Activated CD4-positive, alpha-beta T cell treated with anti-CD3 and anti-CD28 coated beads for 36 hours (primary cell): ENCODE measurements at regions of chr12 and their contacts with region 1.

Region 1: DNA sequence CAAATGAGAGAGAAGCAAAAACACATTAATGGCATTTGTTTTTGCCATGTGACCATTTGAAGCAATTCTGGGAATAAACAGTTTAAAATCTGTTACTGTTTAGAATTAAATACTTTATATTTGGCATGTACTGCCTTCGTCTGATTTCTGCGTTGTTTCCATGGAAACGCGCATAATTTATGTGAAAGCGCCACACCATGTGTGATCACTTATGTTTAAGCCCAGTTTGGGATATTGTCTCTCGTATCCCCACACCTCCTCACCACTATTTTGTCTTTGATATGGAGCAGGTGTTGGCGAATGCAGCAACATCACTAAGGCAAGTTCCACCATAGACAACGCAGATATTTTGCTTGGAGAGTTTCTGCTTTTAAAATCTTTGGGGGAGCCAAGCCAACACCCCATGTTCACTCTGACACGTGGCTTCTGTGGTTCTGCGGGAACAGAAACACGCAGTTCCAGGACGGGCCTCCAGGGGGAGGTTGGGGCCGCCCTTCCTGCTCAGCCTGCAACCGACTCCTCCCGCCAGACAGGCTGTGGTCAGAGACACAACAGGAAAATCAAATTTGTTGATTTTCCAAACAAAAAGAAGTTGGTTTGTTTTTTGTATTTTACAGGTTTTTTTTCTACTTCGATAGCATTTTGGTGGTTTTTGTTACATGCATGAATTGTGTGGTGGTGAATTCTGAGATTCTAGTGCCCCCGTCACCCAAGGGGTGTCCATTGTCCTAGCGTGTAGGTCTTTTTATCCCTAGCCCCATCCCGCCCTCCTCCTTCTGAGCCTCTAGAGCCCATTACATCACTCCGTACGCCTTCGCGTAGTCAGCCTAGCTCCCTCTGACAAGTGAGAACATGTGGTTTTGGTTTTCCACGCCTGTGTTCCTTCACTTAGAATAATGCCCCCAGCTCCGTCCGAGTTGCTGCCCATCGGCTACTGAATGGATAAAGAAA is 101.9 kb upstream of the SFSWAP start:
- DNase-seq: peak; percentile 79
- ATAC-seq: peak; percentile 40
- H3K4me3 Mint-ChIP-seq: no peak overlapping the region
- H3K27ac Mint-ChIP-seq: no peak overlapping the region
- H3K4me1 Mint-ChIP-seq: peaks cover 48% of the 10 kb centered on the region
- H3K27me3 Mint-ChIP-seq: no peaks in the 10 kb centered on the region

Region 2: DNA sequence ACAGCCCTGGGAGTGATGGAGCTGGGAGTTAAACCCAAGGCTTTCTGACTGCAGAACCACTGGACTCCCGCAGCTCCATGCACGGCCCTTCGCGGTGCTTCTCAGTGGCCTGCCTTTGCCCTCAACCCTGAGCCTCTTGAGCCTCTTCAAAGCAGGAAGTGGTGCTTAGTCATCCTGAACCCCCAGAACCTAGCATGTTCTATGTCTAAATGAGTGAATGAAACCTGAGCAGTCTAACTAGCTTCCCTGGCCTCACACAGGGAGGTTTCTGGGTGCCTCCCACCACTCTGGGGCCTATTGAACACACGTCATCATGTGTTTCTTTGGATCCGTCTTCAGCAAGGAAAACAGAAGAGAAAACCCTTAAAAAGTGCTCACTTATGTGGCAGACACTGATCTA is 16.0 kb before region 1 on chr12:
- CTCF ChIA-PET with region 1: interaction called, 4 read pairs
- POLR2A ChIA-PET with region 1: no interaction called
- intact Hi-C with region 1: loop called in 1 of 2 experiments (anchors 1 kb)
- DNase-seq: peak; percentile 59
- ATAC-seq: peak; percentile 98
- H3K4me3 Mint-ChIP-seq: no peak overlapping the region
- H3K27ac Mint-ChIP-seq: no peak overlapping the region
- H3K4me1 Mint-ChIP-seq: peaks cover 11% of the 10 kb centered on the region
- H3K27me3 Mint-ChIP-seq: no peaks in the 10 kb centered on the region

Region 3: DNA sequence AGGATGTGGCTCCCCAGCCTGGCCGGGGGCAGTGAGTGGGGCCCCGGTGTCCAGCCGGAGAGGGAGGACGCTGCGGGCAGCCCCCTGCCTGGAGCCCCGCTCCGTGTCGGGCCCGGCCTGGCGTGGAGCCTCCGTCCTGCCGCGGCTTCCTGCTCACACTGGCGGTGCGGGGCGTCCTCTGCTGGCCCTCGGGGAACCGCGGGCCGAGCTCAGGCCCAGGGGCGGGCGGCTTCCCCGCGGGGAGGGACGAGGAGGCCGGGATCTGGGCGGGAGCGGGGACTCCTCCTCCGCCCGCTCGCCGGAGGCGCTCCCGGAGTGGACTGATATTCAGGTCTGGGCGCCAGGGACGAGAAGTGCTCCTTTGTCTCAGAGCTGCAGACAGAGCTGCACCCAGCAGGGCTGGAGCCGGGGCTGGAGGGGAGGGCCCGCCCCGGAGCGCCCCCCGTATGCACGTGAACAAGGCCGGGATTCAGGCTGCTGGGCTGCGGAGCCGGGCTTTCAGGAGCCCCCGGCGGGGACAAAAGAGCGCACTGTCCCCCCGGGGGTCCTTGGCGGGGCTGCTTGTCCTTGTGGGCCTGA is 221.4 kb after region 1 on chr12:
- CTCF ChIA-PET with region 1: no interaction called
- POLR2A ChIA-PET with region 1: no interaction called
- intact Hi-C with region 1: loop called in 1 of 2 experiments (anchors 2 kb)
- DNase-seq: peak; percentile 69
- ATAC-seq: peak; percentile 63
- H3K4me3 Mint-ChIP-seq: peak overlapping the region; percentile 12
- H3K27ac Mint-ChIP-seq: no peak overlapping the region
- H3K4me1 Mint-ChIP-seq: peaks cover 11% of the 10 kb centered on the region
- H3K27me3 Mint-ChIP-seq: peaks cover 39% of the 10 kb centered on the region